ENCODE measurements at regions of chr13 and their contacts with region 1.

Region 1: GRCh38 chr13:27171827-27172494 is 350 bp upstream of the USP12 start:
- DNase-seq: peak; percentile 94
- ATAC-seq: peak; percentile 83
- H3K4me3 Mint-ChIP-seq: peak overlapping the region; percentile 91
- H3K27ac Mint-ChIP-seq: peak overlapping the region; percentile 93
- H3K4me1 Mint-ChIP-seq: peaks cover 69% of the 10 kb centered on the region
- H3K27me3 Mint-ChIP-seq: no peaks in the 10 kb centered on the region
- CTCF ChIP-seq: no peak

Region 2: DNA sequence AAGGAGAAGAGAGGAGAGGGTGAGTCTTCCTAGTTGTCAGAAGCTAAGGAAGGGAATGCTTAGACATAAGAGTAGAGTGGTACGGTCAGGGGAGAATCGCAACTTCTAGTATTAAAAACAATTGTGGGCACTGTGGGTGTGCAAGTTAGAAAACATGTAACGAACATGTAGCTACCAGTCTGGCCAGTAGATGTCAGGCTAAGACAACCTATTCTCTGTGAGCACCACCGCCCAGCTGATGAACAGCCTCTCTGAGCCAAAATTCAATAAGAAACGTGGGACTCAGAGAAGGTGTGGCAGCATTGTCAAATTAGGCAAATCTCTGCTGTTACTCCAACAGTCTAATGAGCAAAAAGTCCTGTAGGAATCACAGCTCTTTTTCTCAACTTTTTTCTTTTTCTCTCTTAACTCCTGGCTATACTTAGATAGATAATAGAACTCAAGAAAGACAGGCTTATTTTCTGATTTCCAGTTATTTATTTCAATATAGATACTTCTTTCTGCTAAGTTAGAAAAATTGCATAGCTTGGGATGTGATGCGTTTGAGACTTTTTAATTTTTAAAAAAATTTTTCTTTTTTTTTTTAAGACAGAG is 186.6 kb before region 1 on chr13:
- CTCF ChIA-PET with region 1: interaction called, 5 read pairs
- POLR2A ChIA-PET with region 1: no interaction called
- intact Hi-C with region 1: loop called (anchors 1 kb)
- DNase-seq: no peak
- ATAC-seq: peak; percentile 96
- H3K4me3 Mint-ChIP-seq: no peak overlapping the region
- H3K27ac Mint-ChIP-seq: no peak overlapping the region
- H3K4me1 Mint-ChIP-seq: peaks cover 5% of the 10 kb centered on the region
- H3K27me3 Mint-ChIP-seq: peaks cover 6% of the 10 kb centered on the region
- CTCF ChIP-seq: no peak

Region 3: DNA sequence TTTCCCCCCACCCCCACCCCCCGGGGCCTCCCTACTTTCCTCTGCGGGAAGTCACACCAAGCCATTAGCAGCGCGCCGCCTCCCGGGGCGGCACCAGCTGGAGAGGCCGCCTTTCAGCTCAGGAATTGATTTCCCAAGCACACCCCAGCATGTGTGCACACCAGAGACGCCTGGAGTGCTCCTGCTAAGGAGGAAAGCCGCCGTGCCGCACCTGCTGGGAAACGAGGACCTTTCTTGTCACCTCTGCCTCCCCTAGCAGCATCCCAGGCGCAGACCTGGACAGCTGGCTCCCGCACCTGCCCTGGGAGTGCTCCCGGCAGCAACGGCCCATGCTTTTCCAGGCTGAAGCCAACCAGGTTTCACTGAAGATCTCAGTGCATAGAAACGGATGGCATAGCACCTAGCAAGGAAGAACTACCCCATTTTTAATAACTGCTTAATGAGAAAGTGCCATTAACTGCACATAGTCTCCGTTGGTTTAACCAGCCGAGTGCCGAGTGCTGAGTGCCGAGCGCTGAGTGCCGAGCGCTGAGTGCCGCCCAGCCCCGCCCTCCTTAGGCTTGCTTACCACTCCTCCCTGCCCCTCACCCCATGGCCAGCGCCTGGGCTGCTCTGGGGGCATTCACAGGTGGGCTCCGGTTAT is 165.3 kb before region 1 on chr13:
- CTCF ChIA-PET with region 1: no interaction called
- POLR2A ChIA-PET with region 1: no interaction called
- intact Hi-C with region 1: no loop called
- DNase-seq: no peak
- ATAC-seq: peak; percentile 52
- H3K4me3 Mint-ChIP-seq: peak overlapping the region; percentile 56
- H3K27ac Mint-ChIP-seq: no peak overlapping the region
- H3K4me1 Mint-ChIP-seq: peaks cover 18% of the 10 kb centered on the region
- H3K27me3 Mint-ChIP-seq: peaks cover 15% of the 10 kb centered on the region
- CTCF ChIP-seq: no peak

Region 4: DNA sequence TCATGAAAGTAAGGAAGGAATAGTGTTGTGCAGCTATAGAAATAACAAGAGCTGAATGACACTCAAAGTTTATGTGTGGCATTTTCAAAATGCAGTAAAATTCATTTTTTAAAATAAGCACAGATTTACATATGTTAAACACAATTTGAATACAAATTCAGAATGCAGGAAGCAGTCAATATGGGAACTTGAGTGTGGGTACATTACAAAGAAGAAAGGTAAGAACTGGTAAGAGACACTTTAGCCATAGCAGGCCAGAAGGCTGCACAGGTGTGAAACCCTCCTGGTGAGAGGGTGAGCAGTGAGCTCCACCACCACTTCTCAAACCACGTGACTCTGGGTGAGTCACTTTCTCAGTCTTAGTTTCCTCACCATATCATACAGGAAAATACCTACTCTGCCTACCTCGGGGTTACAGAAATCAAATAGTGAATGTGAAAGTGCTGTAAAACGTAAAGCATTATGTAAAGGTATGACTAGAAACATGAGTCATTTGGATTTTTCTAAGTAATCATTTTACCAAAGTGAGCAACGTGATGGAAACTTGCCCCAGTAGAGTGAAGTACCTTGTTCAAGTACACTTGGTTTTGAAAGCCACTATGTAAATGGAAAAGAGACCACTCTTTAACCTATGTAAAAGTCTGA is 40.9 kb before region 1 on chr13:
- CTCF ChIA-PET with region 1: interaction called, 4 read pairs
- POLR2A ChIA-PET with region 1: interaction called, 24 read pairs
- intact Hi-C with region 1: loop called (anchors 1 kb)
- DNase-seq: peak; percentile 28
- ATAC-seq: peak; percentile 88
- H3K4me3 Mint-ChIP-seq: peak overlapping the region; percentile 2
- H3K27ac Mint-ChIP-seq: peak overlapping the region; percentile 88
- H3K4me1 Mint-ChIP-seq: peaks cover 91% of the 10 kb centered on the region
- H3K27me3 Mint-ChIP-seq: no peaks in the 10 kb centered on the region
- CTCF ChIP-seq: no peak

Region 5: GRCh38 chr13:27194895-27195764 is 23.2 kb after region 1 on chr13:
- CTCF ChIA-PET with region 1: no interaction called
- POLR2A ChIA-PET with region 1: interaction called, 4 read pairs
- intact Hi-C with region 1: loop called (anchors 1 kb)
- DNase-seq: no peak
- ATAC-seq: no peak
- H3K4me3 Mint-ChIP-seq: no peak overlapping the region
- H3K27ac Mint-ChIP-seq: no peak overlapping the region
- H3K4me1 Mint-ChIP-seq: peaks cover 17% of the 10 kb centered on the region
- H3K27me3 Mint-ChIP-seq: peaks cover 5% of the 10 kb centered on the region
- CTCF ChIP-seq: no peak

Region 6: GRCh38 chr13:27270594-27271520 is 98.9 kb after region 1 on chr13 and contains the start of gene RASL11A:
- CTCF ChIA-PET with region 1: interaction called, 5 read pairs
- POLR2A ChIA-PET with region 1: interaction called, 7 read pairs
- intact Hi-C with region 1: loop called (anchors 1 kb)
- DNase-seq: peak; percentile 85
- ATAC-seq: peak; percentile 91
- H3K4me3 Mint-ChIP-seq: peak within 1 kb of the TSS; percentile 90
- H3K27ac Mint-ChIP-seq: peak within 1 kb of the TSS; percentile 14
- H3K4me1 Mint-ChIP-seq: peaks cover 28% of the 10 kb centered on the region
- H3K27me3 Mint-ChIP-seq: no peaks in the 10 kb centered on the region
- CTCF ChIP-seq: peak; percentile 99
- total RNA-seq, gene RASL11A: 1.4 and 2.0 TPM in 2 replicates

Region 7: GRCh38 chr13:27424246-27425157 is 252.5 kb after region 1 on chr13 and contains the start of gene GTF3A:
- CTCF ChIA-PET with region 1: interaction called, 3 read pairs
- POLR2A ChIA-PET with region 1: no interaction called
- intact Hi-C with region 1: loop called (anchors 2 kb)
- DNase-seq: peak; percentile 91
- ATAC-seq: peak; percentile 72
- H3K4me3 Mint-ChIP-seq: peak within 1 kb of the TSS; percentile 79
- H3K27ac Mint-ChIP-seq: peak within 1 kb of the TSS; percentile 86
- H3K4me1 Mint-ChIP-seq: peaks cover 42% of the 10 kb centered on the region
- H3K27me3 Mint-ChIP-seq: no peaks in the 10 kb centered on the region
- CTCF ChIP-seq: no peak
- total RNA-seq, gene GTF3A: 119 and 134 TPM in 2 replicates

Region 8: DNA sequence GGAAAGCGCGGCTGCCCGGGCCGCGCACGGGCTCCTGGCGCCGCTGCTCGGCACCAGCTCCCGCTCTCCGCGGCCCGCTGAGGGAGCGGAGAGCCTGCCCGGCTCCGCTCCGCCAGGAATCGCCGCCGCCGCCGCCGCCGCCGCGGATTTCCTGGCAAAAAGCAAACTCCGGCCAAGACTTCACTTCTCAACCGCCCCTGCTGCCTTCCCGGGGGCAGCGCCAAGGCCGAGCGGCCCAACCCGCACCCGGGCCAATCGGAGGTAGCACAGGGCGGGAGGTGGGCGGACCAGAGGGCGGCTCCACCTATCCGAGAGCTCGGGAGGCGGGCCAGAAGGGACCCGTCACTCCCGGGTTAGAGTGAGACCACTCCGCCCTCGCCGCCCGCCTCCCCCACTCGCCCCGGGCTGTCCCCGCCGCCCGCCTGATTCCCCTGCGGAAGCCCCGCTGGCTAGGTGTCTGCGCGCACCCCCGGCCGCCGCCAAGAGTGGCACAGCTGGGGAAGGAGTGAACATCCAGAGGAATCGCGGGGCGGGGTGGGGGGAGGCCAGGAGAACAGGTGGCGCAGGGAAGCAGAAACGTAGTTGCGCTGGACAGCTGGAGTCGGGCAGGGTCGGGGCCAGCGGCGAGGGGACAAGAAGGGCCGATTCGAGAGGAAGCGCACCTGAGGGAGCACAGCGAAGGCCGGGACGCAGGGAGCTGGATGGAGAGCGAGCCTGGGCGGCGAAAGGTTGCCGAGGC is 448.6 kb after region 1 on chr13 and contains the start of gene LNX2:
- CTCF ChIA-PET with region 1: no interaction called
- POLR2A ChIA-PET with region 1: no interaction called
- intact Hi-C with region 1: loop called (anchors 2 kb)
- DNase-seq: peak; percentile 97
- ATAC-seq: peak; percentile 87
- H3K4me3 Mint-ChIP-seq: peak within 1 kb of the TSS; percentile 93
- H3K27ac Mint-ChIP-seq: peak within 1 kb of the TSS; percentile 93
- H3K4me1 Mint-ChIP-seq: peaks cover 54% of the 10 kb centered on the region
- H3K27me3 Mint-ChIP-seq: no peaks in the 10 kb centered on the region
- CTCF ChIP-seq: no peak
- total RNA-seq, gene LNX2: 6.1 and 7.1 TPM in 2 replicates

Region 9: DNA sequence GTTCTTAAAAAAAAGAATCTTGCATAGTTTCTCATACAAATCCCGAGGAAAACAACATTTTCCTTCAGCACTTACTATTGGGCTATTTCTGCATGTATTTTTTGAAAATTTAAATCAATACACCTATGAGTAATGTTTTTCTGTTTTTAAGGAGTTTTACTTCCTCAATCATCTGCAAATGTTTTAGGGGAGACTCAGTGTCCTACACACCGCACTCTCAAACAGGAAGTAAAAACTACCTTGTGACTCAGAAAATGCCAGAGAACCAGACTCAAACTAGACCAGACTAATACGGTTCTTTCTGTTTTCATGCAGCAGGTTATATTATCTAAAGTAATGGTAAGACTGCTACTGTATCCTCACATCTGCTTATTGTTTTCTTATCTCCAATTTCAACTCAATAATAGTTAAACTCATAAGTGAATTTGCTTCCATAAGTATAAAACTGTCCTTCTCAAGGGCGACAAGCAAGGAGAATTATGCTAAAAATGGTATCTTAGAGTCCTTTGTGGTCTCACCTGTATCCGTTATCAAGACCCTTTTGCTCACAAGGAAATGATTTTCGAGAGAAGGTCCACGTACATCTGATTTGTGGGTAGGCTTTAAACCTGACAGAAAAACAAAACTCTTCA is 875.9 kb after region 1 on chr13:
- CTCF ChIA-PET with region 1: no interaction called
- POLR2A ChIA-PET with region 1: no interaction called
- intact Hi-C with region 1: no loop called
- DNase-seq: no peak
- ATAC-seq: peak; percentile 92
- H3K4me3 Mint-ChIP-seq: peak overlapping the region; percentile 72
- H3K27ac Mint-ChIP-seq: peak overlapping the region; percentile 93
- H3K4me1 Mint-ChIP-seq: peaks cover 69% of the 10 kb centered on the region
- H3K27me3 Mint-ChIP-seq: no peaks in the 10 kb centered on the region
- CTCF ChIP-seq: no peak